ENCODE measurements at regions of chr12 and their contacts with region 1.

Region 1: DNA sequence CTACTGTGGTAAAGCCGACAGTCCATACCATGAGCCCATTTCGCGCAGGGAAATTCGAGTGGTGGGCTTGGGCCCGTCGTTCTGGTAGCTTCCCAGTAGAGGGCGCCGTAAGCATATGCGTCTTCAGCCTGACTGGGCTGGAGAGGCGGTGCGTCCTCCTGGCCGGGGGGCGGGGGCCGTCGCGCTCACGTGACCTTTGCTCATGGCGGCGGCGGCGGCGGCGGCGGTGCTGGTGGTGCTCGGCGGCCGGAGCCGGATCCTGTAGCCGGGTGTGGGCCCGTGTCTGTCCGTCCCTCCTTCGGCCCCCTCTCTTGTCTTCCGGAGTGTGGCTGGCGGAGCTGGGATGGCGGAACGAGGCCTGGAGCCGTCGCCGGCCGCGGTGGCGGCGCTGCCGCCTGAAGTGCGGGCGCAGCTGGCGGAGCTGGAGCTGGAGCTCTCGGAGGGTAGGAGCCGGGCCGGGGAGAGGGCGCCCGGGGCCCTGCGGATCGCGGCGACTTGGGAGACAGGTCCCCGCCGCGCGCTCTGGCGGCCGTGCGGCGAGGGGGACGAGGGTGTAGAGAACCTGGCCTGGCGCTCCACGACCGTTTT is at the start of gene DIP2B:
- DNase-seq: peak; percentile 98
- ATAC-seq: peak; percentile 85
- H3K4me3 Mint-ChIP-seq: peak within 1 kb of the TSS; percentile 98
- H3K27ac Mint-ChIP-seq: peak within 1 kb of the TSS; percentile 96
- H3K4me1 Mint-ChIP-seq: peaks cover 43% of the 10 kb centered on the region
- H3K27me3 Mint-ChIP-seq: no peaks in the 10 kb centered on the region
- total RNA-seq, gene DIP2B: 29.2 to 29.4 TPM

Region 2: GRCh38 chr12:50081096-50081808 is 423.6 kb before region 1 on chr12:
- CTCF ChIA-PET with region 1: no interaction called
- POLR2A ChIA-PET with region 1: no interaction called
- intact Hi-C with region 1: no loop called
- DNase-seq: no peak
- ATAC-seq: no peak
- H3K4me3 Mint-ChIP-seq: no peak overlapping the region
- H3K27ac Mint-ChIP-seq: no peak overlapping the region
- H3K4me1 Mint-ChIP-seq: peaks cover 16% of the 10 kb centered on the region
- H3K27me3 Mint-ChIP-seq: no peaks in the 10 kb centered on the region

Region 3: DNA sequence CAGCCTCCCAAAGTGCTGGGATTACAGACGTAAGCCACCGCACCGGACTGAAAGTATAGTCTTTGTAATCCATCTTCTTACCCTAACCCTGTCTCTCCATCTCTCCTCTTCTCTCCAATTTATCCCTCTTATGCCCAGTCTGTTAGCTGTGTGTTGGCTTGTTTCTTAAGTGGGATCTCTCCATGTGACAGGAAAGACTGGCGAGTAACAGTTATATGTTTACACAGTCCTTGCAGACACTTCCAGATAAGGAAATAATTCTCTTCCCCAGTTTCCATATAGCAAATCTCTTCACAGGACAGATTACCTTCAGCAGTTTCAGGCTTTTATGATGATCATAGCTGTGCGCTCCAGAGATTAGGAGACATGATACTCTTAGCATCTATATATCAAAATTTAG is 16.1 kb before region 1 on chr12:
- CTCF ChIA-PET with region 1: interaction called, 10 read pairs
- POLR2A ChIA-PET with region 1: no interaction called
- intact Hi-C with region 1: no loop called
- DNase-seq: no peak
- ATAC-seq: no peak
- H3K4me3 Mint-ChIP-seq: no peak overlapping the region
- H3K27ac Mint-ChIP-seq: no peak overlapping the region
- H3K4me1 Mint-ChIP-seq: no peaks in the 10 kb centered on the region
- H3K27me3 Mint-ChIP-seq: no peaks in the 10 kb centered on the region

Region 4: GRCh38 chr12:50523765-50524164 is 18.9 kb after region 1 on chr12:
- CTCF ChIA-PET with region 1: interaction called, 18 read pairs
- POLR2A ChIA-PET with region 1: interaction called, 4 read pairs
- intact Hi-C with region 1: no loop called
- DNase-seq: no peak
- ATAC-seq: no peak
- H3K4me3 Mint-ChIP-seq: no peak overlapping the region
- H3K27ac Mint-ChIP-seq: no peak overlapping the region
- H3K4me1 Mint-ChIP-seq: peaks cover 33% of the 10 kb centered on the region
- H3K27me3 Mint-ChIP-seq: no peaks in the 10 kb centered on the region

Region 5: GRCh38 chr12:50550530-50551223 is 45.8 kb after region 1 on chr12:
- CTCF ChIA-PET with region 1: interaction called, 5 read pairs
- POLR2A ChIA-PET with region 1: interaction called, 10 read pairs
- intact Hi-C with region 1: loop called in 1 of 2 experiments (anchors 1 kb)
- DNase-seq: no peak
- ATAC-seq: no peak
- H3K4me3 Mint-ChIP-seq: no peak overlapping the region
- H3K27ac Mint-ChIP-seq: no peak overlapping the region
- H3K4me1 Mint-ChIP-seq: peaks cover 66% of the 10 kb centered on the region
- H3K27me3 Mint-ChIP-seq: no peaks in the 10 kb centered on the region

Region 6: DNA sequence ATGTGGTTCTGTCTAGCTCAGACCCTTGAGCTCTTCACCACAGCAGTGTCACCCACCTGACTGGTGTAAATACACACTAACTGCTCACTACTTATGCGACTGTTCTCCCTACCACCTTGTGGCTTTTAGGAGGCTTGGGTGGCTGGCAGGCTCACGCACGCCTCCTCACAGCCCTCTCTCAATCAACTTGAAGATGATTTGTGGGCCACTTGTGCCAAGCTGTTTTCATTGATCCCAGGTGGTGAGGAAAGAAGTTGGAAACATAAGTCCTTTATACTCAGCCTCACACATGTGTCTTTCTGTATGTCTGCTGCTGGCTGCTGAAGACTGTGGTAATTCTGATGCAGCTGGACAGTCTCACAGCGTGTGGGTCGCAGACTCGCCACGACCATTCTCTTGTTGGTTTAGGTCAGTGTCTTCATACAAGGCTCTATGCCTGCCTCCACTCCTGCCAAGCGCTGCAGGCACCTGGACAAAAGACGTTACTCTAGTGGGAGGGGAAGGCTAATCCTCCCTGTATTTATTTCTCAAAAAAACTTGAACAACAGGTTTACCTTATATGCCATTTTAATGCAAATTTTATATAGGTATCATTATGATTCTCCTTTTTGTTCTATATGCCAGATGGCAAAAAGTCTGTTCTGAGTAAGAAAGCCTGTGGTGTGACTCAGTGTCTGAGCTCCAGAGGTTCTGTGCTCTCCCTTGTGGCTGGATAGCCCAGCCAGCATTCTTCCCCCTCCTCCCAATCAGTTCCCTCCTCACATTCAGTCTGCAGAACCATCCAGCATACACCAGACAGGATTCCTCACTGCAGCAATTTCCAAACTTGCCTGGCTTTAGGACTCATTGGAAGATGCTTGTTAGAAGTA is 115.5 kb after region 1 on chr12:
- CTCF ChIA-PET with region 1: interaction called, 13 read pairs
- POLR2A ChIA-PET with region 1: interaction called, 5 read pairs
- intact Hi-C with region 1: loop called in 1 of 2 experiments (anchors 5 kb)
- DNase-seq: peak; percentile 59
- ATAC-seq: peak; percentile 86
- H3K4me3 Mint-ChIP-seq: no peak overlapping the region
- H3K27ac Mint-ChIP-seq: peak overlapping the region; percentile 86
- H3K4me1 Mint-ChIP-seq: peaks cover 64% of the 10 kb centered on the region
- H3K27me3 Mint-ChIP-seq: no peaks in the 10 kb centered on the region

Region 7: DNA sequence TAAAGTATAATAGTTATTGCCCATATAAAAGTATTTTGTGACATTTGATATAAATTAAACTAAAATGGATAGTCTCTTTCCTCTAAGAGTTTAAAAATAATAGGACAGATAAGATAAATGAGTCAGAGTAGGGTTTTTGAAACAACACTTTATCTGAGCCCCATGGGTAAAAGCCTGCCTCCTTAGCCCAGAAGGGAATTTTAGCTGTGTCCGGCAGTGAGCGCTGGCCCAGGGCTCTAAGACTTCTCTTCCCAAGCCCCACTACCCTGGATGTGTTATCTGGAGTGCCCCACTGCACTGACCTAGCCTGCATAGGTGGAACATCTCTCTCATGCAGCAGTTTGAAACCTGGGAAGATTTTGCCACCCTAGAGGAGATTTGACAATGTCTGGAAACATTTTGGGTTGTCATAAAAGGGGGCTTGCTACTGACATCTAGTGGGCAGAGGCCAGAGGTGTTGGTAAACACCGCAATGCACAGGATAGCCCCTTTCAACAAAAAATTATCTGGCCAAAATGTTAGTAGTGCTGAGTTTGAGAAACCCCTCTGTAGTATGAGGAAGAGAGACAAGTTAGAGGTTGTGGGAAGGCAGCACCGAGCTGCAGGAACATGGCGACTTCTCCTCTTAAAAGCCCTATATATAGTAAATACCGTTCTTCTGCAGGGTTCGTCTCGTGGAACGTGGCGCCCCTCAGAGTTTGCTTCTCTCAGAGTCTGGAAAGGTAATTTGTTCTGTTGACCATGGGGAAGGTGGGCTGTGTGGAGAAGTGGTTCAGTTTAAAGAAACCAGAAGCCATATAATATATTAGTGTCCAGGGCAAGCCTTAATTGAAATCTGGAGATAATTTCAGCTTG is 229.7 kb after region 1 on chr12:
- CTCF ChIA-PET with region 1: interaction called, 4 read pairs
- POLR2A ChIA-PET with region 1: no interaction called
- intact Hi-C with region 1: loop called (anchors 1 to 10 kb)
- DNase-seq: peak; percentile 34
- ATAC-seq: peak; percentile 51
- H3K4me3 Mint-ChIP-seq: no peak overlapping the region
- H3K27ac Mint-ChIP-seq: no peak overlapping the region
- H3K4me1 Mint-ChIP-seq: no peaks in the 10 kb centered on the region
- H3K27me3 Mint-ChIP-seq: no peaks in the 10 kb centered on the region